Mucosa of descending colon (tissue), 3 donors: ENCODE measurements at regions of chrX and their contacts with region 1.

Region 1: GRCh38 chrX:87664381-87664780 is 146.8 kb downstream of the KLHL4 start:
- DNase-seq: no peak
- ATAC-seq: no peak
- H3K4me3 ChIP-seq: no peak overlapping the region
- H3K4me1 ChIP-seq: no peaks in the 10 kb centered on the region
- CTCF ChIP-seq: no peak

Region 2: DNA sequence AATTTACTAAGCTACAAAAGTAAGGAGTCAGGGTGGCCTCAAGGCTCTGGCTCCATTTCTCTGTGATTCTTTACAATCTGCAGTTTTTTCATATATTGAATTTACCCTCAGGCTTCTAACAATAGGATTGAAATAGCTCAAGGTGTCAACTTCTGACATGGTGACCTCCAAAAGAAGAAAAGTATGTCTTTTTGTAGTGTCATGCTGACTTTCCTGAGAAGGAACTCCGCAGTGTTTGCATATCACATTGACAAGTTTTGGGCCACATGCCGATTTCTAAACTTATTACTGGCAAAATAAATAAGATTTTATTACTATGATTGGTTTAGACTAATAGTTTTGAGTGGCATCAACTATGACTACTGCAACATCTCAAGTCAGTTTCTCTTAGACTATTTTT is 324.4 kb before region 1 on chrX:
- intact Hi-C with region 1: loop called in 1 of 2 experiments (anchors 10 kb)
- DNase-seq: no peak
- ATAC-seq: no peak
- H3K4me3 ChIP-seq: no peak overlapping the region
- H3K4me1 ChIP-seq: no peaks in the 10 kb centered on the region
- CTCF ChIP-seq: no peak